Left colon (tissue), 2 donors: ENCODE measurements at regions of chr20 and their contacts with region 1.

Region 1: DNA sequence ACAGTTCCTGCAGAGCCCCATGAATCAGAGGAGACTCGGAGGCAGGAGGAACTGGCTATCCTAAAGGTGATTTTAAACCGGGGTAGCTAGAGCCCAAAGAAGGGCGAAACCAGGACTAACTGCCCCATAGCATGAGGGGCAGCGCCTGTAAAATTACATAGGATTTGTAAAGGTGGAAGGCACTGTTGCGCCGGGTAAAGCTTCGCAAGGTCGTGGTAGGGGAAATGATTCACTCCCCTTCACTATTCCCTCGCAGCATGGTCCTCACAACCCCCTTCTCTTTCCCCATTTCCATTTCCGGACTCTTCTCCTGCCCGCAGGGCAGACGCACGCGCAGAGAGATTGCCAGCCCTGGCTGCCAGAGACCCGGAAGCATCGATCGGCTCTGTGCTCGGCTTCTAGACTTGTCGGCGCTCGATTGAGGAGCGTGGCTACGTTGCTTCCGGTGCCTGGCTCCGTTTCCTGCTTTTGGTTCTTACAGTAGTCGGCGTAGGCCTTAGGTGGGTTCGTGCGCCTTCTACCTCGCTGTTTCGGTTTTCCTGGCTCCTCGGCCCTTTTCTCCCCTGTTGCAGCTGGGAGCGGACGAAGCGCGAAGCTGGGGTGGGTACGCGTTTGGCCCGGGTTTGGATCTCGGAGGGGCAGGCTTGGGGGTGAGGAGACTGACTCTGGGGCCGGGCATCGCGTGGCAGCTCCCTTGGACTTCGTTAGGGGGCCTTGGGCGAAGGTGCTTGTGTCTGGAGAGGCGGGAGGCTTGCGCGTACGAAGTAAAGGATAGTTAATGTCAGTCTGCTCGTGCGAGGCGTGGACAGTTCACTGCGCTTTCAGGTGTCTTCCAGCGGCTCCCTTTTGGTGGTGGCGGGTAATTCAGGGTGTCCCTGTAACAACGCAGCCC is at the start of gene SNRPB2:
- DNase-seq: peak; percentile 94
- ATAC-seq: peak; percentile 100
- total RNA-seq, gene SNRPB2: 33.3 to 33.5 TPM

Region 2: GRCh38 chr20:16573001-16573965 is 156.5 kb before region 1 on chr20 and contains the start of gene KIF16B:
- intact Hi-C with region 1: loop called in 1 of 2 experiments (anchors 10 kb)
- DNase-seq: peak; percentile 91 to 95
- ATAC-seq: peak; percentile 84
- total RNA-seq, gene KIF16B: 66.9 to 71.1 TPM